ENCODE measurements at regions of chr9 and their contacts with region 1.

Region 1: DNA sequence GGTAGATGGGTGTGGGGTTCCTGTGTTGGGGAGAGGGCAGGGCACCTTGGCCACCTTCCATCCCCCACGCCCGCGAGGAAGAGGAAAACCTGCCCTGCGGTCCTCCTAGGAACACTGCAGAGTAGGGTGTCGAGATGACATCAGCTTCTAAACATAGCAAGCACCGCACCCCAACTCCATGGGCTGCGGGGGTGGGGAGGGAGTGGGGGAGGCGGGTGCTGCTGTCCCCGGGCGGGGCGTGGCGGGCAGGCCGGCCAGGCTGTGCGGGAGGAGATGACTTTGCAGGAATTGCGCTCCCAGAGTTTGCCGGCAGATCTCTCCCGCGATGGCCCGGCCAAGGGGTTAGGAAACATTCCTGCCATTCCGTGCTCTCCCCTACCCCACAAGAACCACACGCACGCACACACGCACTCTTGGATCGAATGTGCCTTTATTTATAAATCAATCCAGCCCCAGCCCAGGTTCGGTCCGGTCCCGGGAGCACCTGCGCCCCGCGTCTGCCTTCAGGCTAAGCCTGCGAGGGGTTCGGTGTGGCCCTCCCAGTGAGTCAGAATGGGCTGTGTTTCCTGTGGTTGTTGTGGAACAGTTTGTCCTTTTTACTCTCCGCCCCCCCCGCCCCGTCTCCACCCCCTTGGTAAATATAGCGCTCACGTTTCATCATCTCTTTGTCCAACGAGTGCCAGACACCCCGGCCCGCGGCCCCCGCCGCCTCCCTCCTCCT is 5.2 kb upstream of the KLF9 start:
- DNase-seq: peak; percentile 96 to 97
- ATAC-seq: peak; percentile 68 to 86 (median 74)
- H3K4me3 ChIP-seq: peak overlapping the region in 9 of 10 donors; percentile 45 to 71 (median 64)
- H3K27ac ChIP-seq: peak overlapping the region; percentile 95 to 100 (median 100)
- H3K4me1 ChIP-seq: peaks cover 22 to 74% (median 60%) of the 10 kb centered on the region in 9 donors
- H3K27me3 ChIP-seq: no peaks in the 10 kb centered on the region
- CTCF ChIP-seq: peak in 2 of 9 donors; percentile 34 to 36

Region 2: DNA sequence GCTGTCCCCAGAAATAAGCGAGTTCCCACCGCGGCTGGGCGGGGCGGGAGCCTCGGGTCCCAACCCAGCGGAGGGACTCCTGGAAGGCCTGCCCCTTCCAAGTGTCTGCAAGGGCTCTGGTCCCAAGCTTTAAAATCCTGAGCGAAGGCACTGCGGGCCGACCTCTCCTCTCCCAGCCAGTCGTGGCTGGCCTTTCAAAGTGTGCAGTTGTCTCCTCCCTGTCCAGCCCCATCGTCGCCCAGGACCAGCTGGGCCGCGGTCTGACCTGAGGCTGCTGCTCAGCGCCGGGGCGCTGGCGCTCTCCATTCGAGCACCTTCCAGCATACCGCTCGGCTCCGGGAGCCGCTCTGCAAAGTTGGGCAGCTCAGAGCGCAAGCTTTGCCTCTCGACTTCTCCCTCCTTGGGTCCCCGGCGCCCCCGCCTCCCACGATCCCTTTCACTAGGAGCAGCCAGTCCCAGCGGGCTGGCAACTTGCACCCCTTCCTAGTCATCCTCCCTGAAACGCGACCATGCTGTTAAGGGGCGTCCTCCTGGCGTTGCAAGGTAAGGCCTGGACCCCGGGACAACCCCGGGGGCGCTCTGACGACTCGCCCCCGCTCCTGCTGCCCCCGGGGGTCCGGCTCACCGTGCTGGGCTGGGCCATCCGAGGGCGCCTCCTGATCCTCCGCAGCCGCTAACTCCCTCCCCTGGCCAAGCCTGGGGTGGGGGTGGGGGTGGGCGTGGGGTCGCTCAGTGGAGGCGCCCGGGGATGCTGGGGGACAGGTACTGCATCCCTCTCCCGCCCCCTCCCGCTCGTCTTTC is 375.8 kb before region 1 on chr9 and contains the start of gene MAMDC2:
- intact Hi-C with region 1: no loop called
- DNase-seq: peak; percentile 59 to 76
- ATAC-seq: peak; percentile 72 to 86 (median 78)
- H3K4me3 ChIP-seq: peak within 1 kb of the TSS; percentile 37 to 68 (median 59)
- H3K27ac ChIP-seq: peak within 1 kb of the TSS; percentile 44 to 82 (median 69)
- H3K4me1 ChIP-seq: peaks cover 11 to 61% (median 28%) of the 10 kb centered on the region in 9 donors
- H3K27me3 ChIP-seq: peaks cover 0 to 37% (median 7%) of the 10 kb centered on the region in 7 donors
- CTCF ChIP-seq: no peak
- total RNA-seq, gene MAMDC2: 2.3 to 11.8 (median 5.0) TPM

Region 3: DNA sequence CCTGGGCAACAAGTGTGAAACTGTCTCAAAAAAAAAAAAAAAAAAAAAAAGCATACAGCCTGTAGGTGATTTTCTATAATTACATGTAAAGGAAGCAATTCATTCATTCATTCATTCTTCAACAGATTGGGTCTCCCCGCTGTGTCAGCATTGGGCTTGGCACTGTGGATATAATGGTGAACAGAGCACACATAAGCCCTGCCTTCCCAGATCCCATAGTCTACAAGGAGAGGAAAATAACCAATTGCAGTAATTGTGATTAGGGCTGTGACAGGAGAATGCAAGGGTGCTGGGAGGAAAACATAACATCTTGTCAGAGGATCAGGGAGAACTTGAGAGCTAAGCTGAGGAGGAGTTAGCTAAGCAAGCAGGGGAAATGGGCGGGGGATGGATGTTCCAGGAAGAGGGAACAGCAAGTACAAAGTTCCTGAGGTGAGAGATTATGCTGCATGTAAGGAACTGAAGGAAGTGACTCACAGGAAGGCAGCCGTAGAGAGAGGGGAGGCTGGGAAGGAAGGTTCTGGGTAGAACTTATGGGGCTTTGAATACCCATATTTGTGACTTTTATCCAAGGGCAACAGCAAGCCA is 18.7 kb after region 1 on chr9:
- intact Hi-C with region 1: loop called in 2 of 10 experiments (anchors 2 kb)
- DNase-seq: peak; percentile 34 to 73
- ATAC-seq: peak; percentile 58 to 97 (median 92)
- H3K4me3 ChIP-seq: no peak overlapping the region
- H3K27ac ChIP-seq: peak overlapping the region; percentile 55 to 87 (median 71)
- H3K4me1 ChIP-seq: peaks cover 0 to 45% (median 31%) of the 10 kb centered on the region in 9 donors
- H3K27me3 ChIP-seq: no peaks in the 10 kb centered on the region
- CTCF ChIP-seq: no peak

Region 4: GRCh38 chr9:70466976-70467561 is 47.4 kb after region 1 on chr9:
- intact Hi-C with region 1: loop called in 3 of 10 experiments (anchors 1 to 5 kb)
- DNase-seq: no peak
- ATAC-seq: peak in 2 of 8 donors; percentile 1 to 53
- H3K4me3 ChIP-seq: no peak overlapping the region
- H3K27ac ChIP-seq: peak overlapping the region in 3 of 10 donors; percentile 45 to 75 (median 65)
- H3K4me1 ChIP-seq: peaks cover 14 to 57% (median 36%) of the 10 kb centered on the region in 9 donors
- H3K27me3 ChIP-seq: no peaks in the 10 kb centered on the region
- CTCF ChIP-seq: peak in 1 of 9 donors; percentile 14

Region 5: DNA sequence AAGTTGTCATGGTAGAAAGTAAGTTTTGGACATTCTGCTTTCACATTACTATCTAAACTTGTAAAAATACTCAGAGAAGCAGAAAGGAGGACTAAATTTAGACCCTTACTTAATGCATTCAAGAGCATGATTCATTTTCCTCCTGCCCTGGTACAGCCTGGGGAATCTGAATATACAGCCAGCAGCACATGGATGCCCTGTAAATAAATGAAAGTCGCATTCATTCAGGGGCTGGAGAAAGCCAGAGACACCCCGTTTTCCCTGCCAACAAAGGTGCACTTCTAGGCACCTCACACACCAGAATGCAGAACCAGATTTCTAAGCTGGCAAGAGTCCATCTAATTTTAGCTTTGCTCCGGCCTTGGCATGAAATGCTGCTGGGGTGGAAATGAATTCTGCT is 167.5 kb after region 1 on chr9:
- intact Hi-C with region 1: loop called in 3 of 10 experiments (anchors 5 to 10 kb)
- DNase-seq: peak in 1 of 2 donors; percentile 36
- ATAC-seq: peak; percentile 65 to 89 (median 80)
- H3K4me3 ChIP-seq: no peak overlapping the region
- H3K27ac ChIP-seq: peak overlapping the region; percentile 69 to 91 (median 80)
- H3K4me1 ChIP-seq: peaks cover 22 to 64% (median 58%) of the 10 kb centered on the region in 9 donors
- H3K27me3 ChIP-seq: no peaks in the 10 kb centered on the region
- CTCF ChIP-seq: no peak

Measured in heart right ventricle (tissue), 16 donors.